BJ (cell line): ENCODE measurements at regions of chr1 and their contacts with region 1.

Region 1: DNA sequence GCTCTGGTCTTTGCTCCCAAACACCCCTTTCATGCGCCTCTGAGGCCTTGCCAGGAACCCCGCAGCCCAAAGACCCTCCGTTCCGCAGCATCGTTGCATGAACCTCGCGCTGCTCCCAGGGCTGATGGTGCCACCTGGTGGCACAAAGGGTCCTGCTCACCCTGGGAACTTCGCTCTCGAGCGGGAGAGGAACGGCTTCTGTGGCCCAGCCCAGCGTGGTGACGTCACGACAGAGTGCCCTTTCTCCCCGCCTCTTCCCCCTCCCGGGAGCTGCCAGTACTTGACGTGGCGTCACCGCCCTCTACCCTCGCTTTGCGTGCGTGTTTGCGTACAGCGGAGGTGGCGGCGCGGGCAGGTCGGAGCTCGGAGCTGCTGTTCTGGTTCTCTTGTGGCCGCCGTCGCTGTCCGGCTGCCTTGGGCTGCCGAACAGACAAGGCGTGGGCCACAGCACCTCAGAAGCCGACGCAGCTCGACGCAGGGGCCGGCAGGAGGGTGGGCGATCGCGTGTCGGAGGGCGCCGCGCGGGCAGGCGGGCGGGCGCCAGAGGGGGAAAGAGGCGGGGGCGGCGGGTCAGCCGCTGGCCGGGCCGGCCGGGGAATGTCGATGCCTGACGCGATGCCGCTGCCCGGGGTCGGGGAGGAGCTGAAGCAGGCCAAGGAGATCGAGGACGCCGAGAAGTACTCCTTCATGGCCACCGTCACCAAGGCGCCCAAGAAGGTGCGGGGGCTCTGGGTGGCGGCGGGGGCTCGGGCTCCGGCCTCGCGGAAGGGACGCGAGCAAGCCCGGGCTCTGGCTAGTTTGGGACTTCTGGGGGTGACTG is at the start of gene AHCYL1:
- DNase-seq: peak; percentile 86
- H3K4me3 ChIP-seq: peak within 1 kb of the TSS; percentile 89
- H3K27me3 ChIP-seq: no peaks in the 10 kb centered on the region
- CTCF ChIP-seq: peak; percentile 96
- polyA plus RNA-seq, gene AHCYL1: 95.5 and 105 TPM in 2 replicates

Region 2: DNA sequence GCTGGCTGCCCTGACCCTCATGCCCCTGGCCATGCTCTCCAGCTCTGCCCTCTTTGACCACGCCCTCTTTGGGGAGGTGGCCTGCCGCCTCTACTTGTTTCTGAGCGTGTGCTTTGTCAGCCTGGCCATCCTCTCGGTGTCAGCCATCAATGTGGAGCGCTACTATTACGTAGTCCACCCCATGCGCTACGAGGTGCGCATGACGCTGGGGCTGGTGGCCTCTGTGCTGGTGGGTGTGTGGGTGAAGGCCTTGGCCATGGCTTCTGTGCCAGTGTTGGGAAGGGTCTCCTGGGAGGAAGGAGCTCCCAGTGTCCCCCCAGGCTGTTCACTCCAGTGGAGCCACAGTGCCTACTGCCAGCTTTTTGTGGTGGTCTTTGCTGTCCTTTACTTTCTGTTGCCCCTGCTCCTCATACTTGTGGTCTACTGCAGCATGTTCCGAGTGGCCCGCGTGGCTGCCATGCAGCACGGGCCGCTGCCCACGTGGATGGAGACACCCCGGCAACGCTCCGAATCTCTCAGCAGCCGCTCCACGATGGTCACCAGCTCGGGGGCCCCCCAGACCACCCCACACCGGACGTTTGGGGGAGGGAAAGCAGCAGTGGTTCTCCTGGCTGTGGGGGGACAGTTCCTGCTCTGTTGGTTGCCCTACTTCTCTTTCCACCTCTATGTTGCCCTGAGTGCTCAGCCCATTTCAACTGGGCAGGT is 441.2 kb before region 1 on chr1:
- CTCF ChIA-PET with region 1: interaction called, 19 read pairs
- POLR2A ChIA-PET with region 1: no interaction called
- DNase-seq: no peak
- H3K4me3 ChIP-seq: no peak overlapping the region
- H3K27me3 ChIP-seq: peaks cover 5% of the 10 kb centered on the region; the same call in 1 of the 2 replicates
- CTCF ChIP-seq: no peak

Region 3: GRCh38 chr1:109649491-109649914 is 335.2 kb before region 1 on chr1:
- CTCF ChIA-PET with region 1: interaction called, 23 read pairs
- POLR2A ChIA-PET with region 1: no interaction called
- DNase-seq: no peak
- H3K4me3 ChIP-seq: peak overlapping the region; percentile 34
- H3K27me3 ChIP-seq: peaks cover 2% of the 10 kb centered on the region; the same call in 1 of the 2 replicates
- CTCF ChIP-seq: peak; percentile 60

Region 4: DNA sequence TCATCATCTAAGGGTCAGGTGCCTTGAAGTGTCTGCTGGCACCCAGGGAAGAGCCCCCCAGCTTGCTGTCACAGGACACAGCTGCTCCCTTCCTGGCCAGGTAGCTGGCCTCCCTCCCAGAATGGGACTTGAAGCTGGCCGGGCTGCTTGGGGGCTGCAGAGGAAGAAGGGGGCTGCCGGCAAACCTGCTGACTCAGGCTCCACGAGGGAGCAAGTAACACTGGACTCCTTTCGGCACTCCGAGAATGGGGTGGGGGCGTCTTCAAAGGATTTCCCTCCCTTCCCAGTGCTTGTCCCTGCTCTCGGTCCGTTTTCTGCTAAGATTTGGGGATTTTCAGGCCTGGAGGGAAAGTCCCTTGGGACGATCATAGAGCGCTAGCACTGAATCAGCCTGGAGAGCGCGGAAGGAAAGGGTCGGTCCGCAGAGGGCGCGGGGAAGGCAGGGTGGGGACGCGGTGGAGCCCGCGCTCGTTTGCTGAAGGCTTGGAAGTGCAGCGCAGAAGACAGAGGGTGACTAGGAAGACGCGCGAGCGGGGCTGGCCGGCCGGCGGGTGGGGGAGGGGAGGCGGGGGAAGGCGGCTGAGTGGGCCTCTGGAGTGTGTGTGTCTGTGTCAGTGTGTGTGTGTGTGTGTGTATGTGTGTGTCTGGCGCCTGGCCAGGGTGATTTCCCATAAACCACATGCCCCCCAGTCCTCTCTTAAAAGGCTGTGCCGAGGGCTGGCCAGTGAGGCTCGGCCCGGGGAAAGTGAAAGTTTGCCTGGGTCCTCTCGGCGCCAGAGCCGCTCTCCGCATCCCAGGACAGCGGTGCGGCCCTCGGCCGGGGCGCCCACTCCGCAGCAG is 74.3 kb before region 1 on chr1 and contains the start of gene CSF1:
- CTCF ChIA-PET with region 1: interaction called, 25 read pairs
- POLR2A ChIA-PET with region 1: no interaction called
- DNase-seq: no peak
- H3K4me3 ChIP-seq: peak within 1 kb of the TSS; percentile 89
- H3K27me3 ChIP-seq: no peaks in the 10 kb centered on the region
- CTCF ChIP-seq: no peak
- polyA plus RNA-seq, gene CSF1: 40.4 and 48.4 TPM in 2 replicates

Region 5: DNA sequence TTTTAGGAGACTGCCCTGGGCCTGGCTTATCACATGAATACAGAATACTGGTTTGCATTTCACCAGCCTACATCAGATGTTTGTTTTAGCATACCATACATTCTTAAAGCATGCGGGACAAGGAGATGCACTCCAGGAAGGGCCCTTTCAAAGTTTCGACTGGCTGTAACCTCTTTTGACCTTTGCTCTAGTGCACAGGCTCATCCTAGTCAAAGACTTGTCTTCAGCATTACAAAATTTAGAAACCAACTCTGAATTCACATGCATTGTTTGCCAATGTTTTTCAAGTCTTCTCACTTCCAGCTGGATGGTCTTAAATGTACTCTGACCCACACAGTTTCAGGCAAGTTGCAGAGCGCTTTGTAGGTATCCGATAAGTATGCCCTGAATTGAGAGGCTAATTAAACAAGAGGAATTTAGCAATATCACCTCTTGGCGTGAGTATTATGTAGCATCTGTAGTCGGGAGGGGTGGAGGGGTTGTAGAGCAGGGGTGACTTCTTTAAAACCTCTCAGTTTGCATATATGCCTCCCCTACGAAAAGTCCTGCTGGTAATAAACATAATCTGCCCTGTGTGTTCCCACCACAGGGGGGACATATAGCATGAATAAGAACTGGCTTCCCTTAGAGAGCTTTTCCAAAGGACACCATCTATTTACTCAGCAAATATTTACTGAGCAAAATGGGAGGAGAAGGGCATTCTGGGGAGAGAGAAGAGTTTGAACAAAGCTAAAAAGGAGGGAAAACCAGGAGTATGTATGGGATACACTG is 24.5 kb before region 1 on chr1:
- CTCF ChIA-PET with region 1: interaction called, 24 read pairs
- POLR2A ChIA-PET with region 1: no interaction called
- DNase-seq: no peak
- H3K4me3 ChIP-seq: no peak overlapping the region
- H3K27me3 ChIP-seq: no peaks in the 10 kb centered on the region
- CTCF ChIP-seq: no peak

Region 6: GRCh38 chr1:110011527-110012041 is 26.9 kb after region 1 on chr1:
- CTCF ChIA-PET with region 1: interaction called, 50 read pairs
- POLR2A ChIA-PET with region 1: interaction called, 6 read pairs
- DNase-seq: no peak
- H3K4me3 ChIP-seq: no peak overlapping the region
- H3K27me3 ChIP-seq: no peaks in the 10 kb centered on the region
- CTCF ChIP-seq: peak; percentile 69